SK-N-SH (cell line): ENCODE measurements at regions of chrX and their contacts with region 1.

Region 1: GRCh38 chrX:102950908-102951866 is 14.1 kb downstream of the RAB40AL start:
- DNase-seq: peak; percentile 64
- H3K4me3 ChIP-seq: peak overlapping the region; percentile 2 to 42; a peak in 2 of 4 replicates
- H3K27ac ChIP-seq: no peak overlapping the region; a peak in 1 of 4 replicates
- H3K4me1 ChIP-seq: peaks cover 0 to 3% of the 10 kb centered on the region in 2 experiments; a peak in 1 of 4 replicates
- H3K27me3 ChIP-seq: no peaks in the 10 kb centered on the region
- CTCF ChIP-seq: peak; percentile 72
- EP300 ChIP-seq: no peak
- RAD21 ChIP-seq: peak; percentile 60

Region 2: DNA sequence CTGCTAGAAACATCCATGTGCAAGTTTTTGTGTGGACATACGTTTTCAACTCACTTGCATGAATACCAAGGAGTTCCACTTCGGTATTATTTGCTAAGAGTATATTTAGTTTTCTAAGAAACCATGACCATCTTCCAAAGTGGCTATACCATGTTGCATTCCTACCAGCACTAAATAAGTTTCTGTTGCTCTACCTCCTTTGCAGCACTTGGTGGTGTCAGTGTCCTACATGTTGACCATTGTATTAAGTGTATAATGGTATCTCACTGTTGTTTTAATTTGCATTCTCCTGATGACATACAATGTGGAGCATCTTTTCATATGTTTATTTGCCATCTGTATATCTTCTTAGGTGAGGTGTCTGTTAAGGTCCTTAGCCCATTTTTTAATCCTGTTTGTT is 307.9 kb before region 1 on chrX:
- CTCF ChIA-PET with region 1: no interaction called
- POLR2A ChIA-PET with region 1: no interaction called
- DNase-seq: no peak
- H3K4me3 ChIP-seq: no peak overlapping the region
- H3K27ac ChIP-seq: no peak overlapping the region
- H3K4me1 ChIP-seq: no peaks in the 10 kb centered on the region
- H3K27me3 ChIP-seq: no peaks in the 10 kb centered on the region
- CTCF ChIP-seq: no peak; the same call in 1 of the 2 replicates
- EP300 ChIP-seq: no peak
- RAD21 ChIP-seq: no peak

Region 3: DNA sequence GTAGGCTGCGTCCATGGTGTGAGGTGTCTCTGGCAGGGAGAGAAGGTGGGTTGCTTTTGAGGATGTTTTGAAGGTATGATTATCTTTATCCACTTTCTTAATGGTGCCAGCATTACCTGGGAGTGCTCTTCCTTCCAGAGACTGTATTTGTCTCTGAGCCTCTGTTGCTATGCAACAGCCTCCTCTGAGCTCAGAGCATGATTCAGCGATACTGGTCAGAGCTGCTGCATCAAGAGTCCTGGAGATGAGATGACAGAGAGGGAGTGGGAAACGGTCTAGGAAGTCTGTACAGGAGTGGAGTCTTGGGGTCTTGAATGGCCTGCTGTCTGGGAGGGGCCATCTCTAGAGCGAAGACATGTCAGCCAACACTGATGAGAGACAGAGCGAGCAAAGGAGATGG is 118.5 kb before region 1 on chrX:
- CTCF ChIA-PET with region 1: no interaction called
- POLR2A ChIA-PET with region 1: no interaction called
- DNase-seq: peak; percentile 5
- H3K4me3 ChIP-seq: no peak overlapping the region
- H3K27ac ChIP-seq: peak overlapping the region in 1 of 2 experiments; percentile 77; a peak in 2 of 4 replicates
- H3K4me1 ChIP-seq: peaks cover 0 to 2% of the 10 kb centered on the region in 2 experiments; a peak in 1 of 4 replicates
- H3K27me3 ChIP-seq: no peaks in the 10 kb centered on the region
- CTCF ChIP-seq: no peak
- EP300 ChIP-seq: no peak
- RAD21 ChIP-seq: no peak

Region 4: GRCh38 chrX:102899940-102900916 is 51.0 kb before region 1 on chrX:
- CTCF ChIA-PET with region 1: interaction called, 23 read pairs
- POLR2A ChIA-PET with region 1: no interaction called
- DNase-seq: peak; percentile 45
- H3K4me3 ChIP-seq: no peak overlapping the region; a peak in 1 of 4 replicates
- H3K27ac ChIP-seq: no peak overlapping the region
- H3K4me1 ChIP-seq: no peaks in the 10 kb centered on the region; a peak in 1 of 4 replicates
- H3K27me3 ChIP-seq: no peaks in the 10 kb centered on the region
- CTCF ChIP-seq: peak; percentile 80
- EP300 ChIP-seq: no peak
- RAD21 ChIP-seq: peak; percentile 71

Region 5: GRCh38 chrX:102934624-102935023 is 16.6 kb before region 1 on chrX:
- CTCF ChIA-PET with region 1: interaction called, 24 read pairs
- POLR2A ChIA-PET with region 1: no interaction called
- DNase-seq: peak; percentile 59
- H3K4me3 ChIP-seq: no peak overlapping the region
- H3K27ac ChIP-seq: no peak overlapping the region
- H3K4me1 ChIP-seq: no peaks in the 10 kb centered on the region
- H3K27me3 ChIP-seq: no peaks in the 10 kb centered on the region
- CTCF ChIP-seq: peak; percentile 78
- EP300 ChIP-seq: no peak
- RAD21 ChIP-seq: peak; percentile 33; the same call in 1 of the 2 replicates

Region 6: GRCh38 chrX:102976793-102977495 is 25.8 kb after region 1 on chrX:
- CTCF ChIA-PET with region 1: interaction called, 20 read pairs
- POLR2A ChIA-PET with region 1: no interaction called
- DNase-seq: no peak
- H3K4me3 ChIP-seq: no peak overlapping the region
- H3K27ac ChIP-seq: no peak overlapping the region
- H3K4me1 ChIP-seq: no peaks in the 10 kb centered on the region
- H3K27me3 ChIP-seq: no peaks in the 10 kb centered on the region; the same call in 1 of the 2 replicates
- CTCF ChIP-seq: no peak
- EP300 ChIP-seq: no peak
- RAD21 ChIP-seq: no peak

Region 7: GRCh38 chrX:102985192-102985591 is 34.0 kb after region 1 on chrX:
- CTCF ChIA-PET with region 1: interaction called, 13 read pairs
- POLR2A ChIA-PET with region 1: no interaction called
- DNase-seq: no peak
- H3K4me3 ChIP-seq: no peak overlapping the region
- H3K27ac ChIP-seq: no peak overlapping the region
- H3K4me1 ChIP-seq: no peaks in the 10 kb centered on the region
- H3K27me3 ChIP-seq: peaks cover 2% of the 10 kb centered on the region; the same call in 1 of the 2 replicates
- CTCF ChIP-seq: no peak
- EP300 ChIP-seq: no peak
- RAD21 ChIP-seq: no peak

Region 8: GRCh38 chrX:103157496-103158320 is 206.5 kb after region 1 on chrX:
- CTCF ChIA-PET with region 1: interaction called, 21 read pairs
- POLR2A ChIA-PET with region 1: no interaction called
- DNase-seq: peak; percentile 46
- H3K4me3 ChIP-seq: no peak overlapping the region
- H3K27ac ChIP-seq: no peak overlapping the region
- H3K4me1 ChIP-seq: peaks cover 2% of the 10 kb centered on the region in 2 experiments; a peak in 2 of 4 replicates
- H3K27me3 ChIP-seq: no peaks in the 10 kb centered on the region; the same call in 1 of the 2 replicates
- CTCF ChIP-seq: peak; percentile 83
- EP300 ChIP-seq: no peak
- RAD21 ChIP-seq: peak; percentile 76

Region 9: GRCh38 chrX:103175944-103176753 is 225.0 kb after region 1 on chrX:
- CTCF ChIA-PET with region 1: interaction called, 31 read pairs
- POLR2A ChIA-PET with region 1: no interaction called
- DNase-seq: peak; percentile 67
- H3K4me3 ChIP-seq: peak overlapping the region; percentile 15 to 27; a peak in 3 of 4 replicates
- H3K27ac ChIP-seq: no peak overlapping the region
- H3K4me1 ChIP-seq: no peaks in the 10 kb centered on the region
- H3K27me3 ChIP-seq: peaks cover 14% of the 10 kb centered on the region; the same call in 1 of the 2 replicates
- CTCF ChIP-seq: peak; percentile 92
- EP300 ChIP-seq: no peak
- RAD21 ChIP-seq: peak; percentile 77